ENCODE measurements at regions of chr3 and their contacts with region 1.

Region 1: GRCh38 chr3:156605686-156606605 is 51.0 kb upstream of the SSR3 start:
- DNase-seq: no peak
- H3K4me3 ChIP-seq: peak overlapping the region; percentile 44
- CTCF ChIP-seq: no peak

Region 2: DNA sequence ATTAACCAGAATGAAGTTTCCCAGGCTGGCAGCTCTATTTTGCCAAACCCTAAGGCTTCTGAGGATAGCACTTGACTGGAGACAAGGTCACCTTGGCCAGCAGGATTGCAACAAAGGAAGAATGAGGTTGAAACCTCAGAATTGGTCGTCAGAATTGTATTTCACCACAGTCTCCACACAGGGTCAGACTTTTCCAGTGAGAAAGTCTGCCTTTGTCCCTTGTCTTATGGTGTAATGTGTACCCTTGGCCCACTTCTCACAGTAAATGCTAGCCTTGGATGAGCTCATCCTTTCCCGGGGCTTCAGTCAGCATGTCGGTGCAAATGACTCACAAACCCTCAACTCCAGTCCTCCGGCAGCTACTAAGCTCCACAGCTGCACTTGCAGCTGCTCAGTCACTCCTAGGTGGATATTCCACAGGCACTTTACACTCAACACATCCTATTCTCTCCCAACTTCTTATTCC is 70.8 kb before region 1 on chr3:
- CTCF ChIA-PET with region 1: no interaction called
- POLR2A ChIA-PET with region 1: no interaction called
- DNase-seq: peak; percentile 97
- H3K4me3 ChIP-seq: no peak overlapping the region
- CTCF ChIP-seq: peak; percentile 29

Region 3: GRCh38 chr3:156554842-156555687 is 50.9 kb before region 1 on chr3 and contains the start of gene SSR3:
- CTCF ChIA-PET with region 1: no interaction called
- POLR2A ChIA-PET with region 1: interaction called, 13 read pairs
- DNase-seq: peak; percentile 97
- H3K4me3 ChIP-seq: peak within 1 kb of the TSS; percentile 71
- CTCF ChIP-seq: no peak

Region 4: GRCh38 chr3:156795890-156796481 is 190.0 kb after region 1 on chr3:
- CTCF ChIA-PET with region 1: no interaction called
- POLR2A ChIA-PET with region 1: no interaction called
- DNase-seq: no peak
- H3K4me3 ChIP-seq: no peak overlapping the region
- CTCF ChIP-seq: no peak

Measured in AG04449 (cell line).